Breast epithelium (tissue), 4 donors: ENCODE measurements at regions of chr9 and their contacts with region 1.

Region 1: DNA sequence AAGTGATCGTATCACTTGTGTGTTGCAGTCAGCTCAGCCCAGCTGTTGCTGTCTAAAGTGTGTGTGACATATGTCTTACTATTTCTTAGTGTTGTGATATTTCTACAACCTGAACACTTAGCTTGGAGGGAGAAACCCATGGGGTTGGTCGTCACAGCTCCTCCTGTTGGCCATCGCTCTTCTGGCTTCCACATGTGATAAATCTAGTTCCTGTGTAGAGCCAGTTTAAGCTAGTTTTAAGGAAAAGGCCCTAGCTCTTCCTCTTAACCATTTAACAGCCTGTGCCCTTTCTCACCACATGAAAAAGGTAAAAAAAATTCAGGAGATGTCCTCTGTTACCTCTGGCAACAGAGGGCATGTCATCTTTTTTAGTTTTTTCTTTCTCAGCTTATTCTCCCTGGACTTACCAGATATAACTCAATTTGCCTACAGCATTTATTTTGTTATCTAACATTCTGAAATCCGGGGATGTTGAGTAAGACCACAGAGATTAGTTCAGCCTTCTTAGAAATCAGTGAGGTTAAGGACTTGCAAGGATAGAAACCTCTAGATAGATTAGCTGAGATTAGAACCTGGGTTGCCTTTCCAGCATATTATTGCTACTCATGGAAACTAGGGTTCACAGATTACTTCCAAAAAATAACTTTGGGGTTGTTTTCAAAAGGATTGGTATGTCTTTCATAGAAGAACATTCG is 100.4 kb downstream of the GAPVD1 start:
- DNase-seq: no peak
- H3K4me3 ChIP-seq: no peak overlapping the region
- H3K27ac ChIP-seq: no peak overlapping the region
- H3K4me1 ChIP-seq: no peaks in the 10 kb centered on the region
- H3K27me3 ChIP-seq: no peaks in the 10 kb centered on the region
- CTCF ChIP-seq: no peak
- POLR2A ChIP-seq: no peak

Region 2: DNA sequence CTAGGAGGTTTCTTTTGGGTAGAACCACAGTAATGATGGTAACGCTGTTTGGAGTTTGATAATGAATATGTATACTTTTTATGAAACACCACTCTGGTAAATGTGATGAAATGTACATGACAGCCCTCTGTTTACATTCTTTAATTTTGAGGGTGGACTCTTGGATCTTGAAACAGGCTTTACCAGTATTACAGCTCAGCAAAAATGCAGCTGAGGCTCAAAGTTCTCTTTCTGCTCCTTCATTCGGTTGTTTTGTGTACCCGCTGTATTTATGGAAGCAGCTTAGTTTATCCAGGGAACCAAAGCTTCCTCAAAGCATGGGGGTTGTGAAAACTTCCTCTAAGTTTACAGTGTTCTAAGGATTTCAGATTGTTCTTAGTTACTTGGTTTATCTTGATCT is 89.3 kb before region 1 on chr9:
- intact Hi-C with region 1: no loop called
- DNase-seq: no peak
- H3K4me3 ChIP-seq: no peak overlapping the region
- H3K27ac ChIP-seq: peak overlapping the region in 1 of 2 donors; percentile 19
- H3K4me1 ChIP-seq: no peaks in the 10 kb centered on the region
- H3K27me3 ChIP-seq: no peaks in the 10 kb centered on the region
- CTCF ChIP-seq: no peak
- POLR2A ChIP-seq: no peak

Region 3: DNA sequence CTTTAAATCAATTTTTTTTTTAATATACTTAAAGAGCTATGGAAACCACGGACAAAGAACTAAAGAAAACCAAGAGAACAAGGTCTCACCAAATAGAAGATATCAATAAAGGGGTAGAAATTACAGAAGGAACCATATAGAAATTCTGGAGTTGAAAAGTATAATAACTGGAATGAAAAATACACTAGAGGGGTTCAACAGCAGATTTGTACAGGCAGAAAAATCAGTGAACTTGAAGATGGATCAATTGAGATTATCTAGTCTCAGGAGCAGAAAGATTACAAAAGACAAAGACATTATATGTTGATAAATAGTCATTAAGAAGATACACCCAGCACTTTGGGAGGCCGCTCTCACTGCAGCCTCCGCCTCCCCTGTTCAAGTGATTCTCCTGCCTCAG is 44.3 kb before region 1 on chr9:
- intact Hi-C with region 1: loop called (anchors 2 kb)
- DNase-seq: no peak
- H3K4me3 ChIP-seq: no peak overlapping the region
- H3K27ac ChIP-seq: no peak overlapping the region
- H3K4me1 ChIP-seq: no peaks in the 10 kb centered on the region
- H3K27me3 ChIP-seq: no peaks in the 10 kb centered on the region
- CTCF ChIP-seq: no peak
- POLR2A ChIP-seq: no peak

Region 4: GRCh38 chr9:125415583-125416460 is 53.8 kb after region 1 on chr9:
- intact Hi-C with region 1: no loop called
- DNase-seq: no peak
- H3K4me3 ChIP-seq: no peak overlapping the region
- H3K27ac ChIP-seq: no peak overlapping the region
- H3K4me1 ChIP-seq: no peaks in the 10 kb centered on the region
- H3K27me3 ChIP-seq: no peaks in the 10 kb centered on the region
- CTCF ChIP-seq: no peak
- POLR2A ChIP-seq: no peak